Activated CD4-positive, alpha-beta memory T cell treated with anti-CD3 and anti-CD28 coated beads, Interleukin-2, amount 10 ng/mL, durations not matched to agents 7 days and 5 days (primary cell): ENCODE measurements at regions of chr3 and their contacts with region 1.

Region 1: DNA sequence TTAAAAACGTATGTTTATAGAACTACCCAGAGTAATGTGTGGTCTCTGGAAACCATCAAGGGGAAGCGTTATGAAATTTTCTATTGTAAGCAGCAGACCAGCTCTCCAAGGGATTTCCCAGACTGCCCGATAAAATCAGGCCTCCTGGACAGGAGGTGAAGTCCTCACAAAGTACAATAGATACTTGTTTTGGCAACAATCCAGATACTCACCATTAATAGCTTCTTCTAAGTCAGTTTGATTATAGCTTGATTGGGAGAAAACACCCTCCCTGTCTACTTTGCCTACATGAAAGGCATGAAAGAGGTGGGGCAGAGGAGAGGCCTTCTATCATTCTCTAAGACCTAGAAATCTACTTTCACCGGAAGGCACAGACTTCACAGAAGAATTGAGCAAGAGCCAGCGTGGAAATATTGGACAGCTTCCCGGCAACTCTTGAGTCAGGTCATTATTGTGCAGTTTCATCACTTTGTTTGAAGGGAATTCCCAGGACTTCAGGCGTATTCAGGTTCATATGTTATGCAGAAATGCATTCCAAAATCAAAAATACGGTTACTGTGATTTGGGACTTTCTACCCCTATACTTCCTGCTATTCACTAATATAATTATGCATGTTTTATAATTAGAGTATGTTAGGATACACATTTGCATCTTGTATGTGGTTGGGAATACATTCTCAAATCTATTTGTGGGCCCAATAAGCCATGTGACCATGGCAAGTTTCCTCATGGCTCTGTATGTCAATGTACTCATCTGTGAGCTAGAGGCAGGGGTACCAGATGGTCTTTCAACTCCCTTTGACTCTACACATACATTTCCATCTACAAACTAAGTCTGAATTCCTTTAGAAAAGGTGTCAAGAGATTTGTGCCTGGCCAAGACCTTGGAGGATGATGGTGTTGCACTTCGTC is 103.5 kb downstream of the CD47 start:
- DNase-seq: no peak
- H3K4me3 Mint-ChIP-seq: no peak overlapping the region
- H3K27ac Mint-ChIP-seq: peak overlapping the region; percentile 89
- H3K4me1 Mint-ChIP-seq: peaks cover 45% of the 10 kb centered on the region
- H3K27me3 Mint-ChIP-seq: no peaks in the 10 kb centered on the region

Region 2: GRCh38 chr3:107938143-107938542 is 49.1 kb before region 1 on chr3:
- CTCF ChIA-PET with region 1: interaction called, 4 read pairs
- POLR2A ChIA-PET with region 1: interaction called, 16 read pairs
- DNase-seq: no peak
- H3K4me3 Mint-ChIP-seq: no peak overlapping the region
- H3K27ac Mint-ChIP-seq: no peak overlapping the region
- H3K4me1 Mint-ChIP-seq: peaks cover 18% of the 10 kb centered on the region
- H3K27me3 Mint-ChIP-seq: peaks cover 15% of the 10 kb centered on the region

Region 3: GRCh38 chr3:108001455-108001854 is 14.2 kb after region 1 on chr3:
- CTCF ChIA-PET with region 1: no interaction called
- POLR2A ChIA-PET with region 1: no interaction called
- DNase-seq: no peak
- H3K4me3 Mint-ChIP-seq: no peak overlapping the region
- H3K27ac Mint-ChIP-seq: no peak overlapping the region
- H3K4me1 Mint-ChIP-seq: peaks cover 2% of the 10 kb centered on the region
- H3K27me3 Mint-ChIP-seq: no peaks in the 10 kb centered on the region